GM12878 (cell line): ENCODE measurements at regions of chr11 and their contacts with region 1.

Region 1: GRCh38 chr11:111378861-111379601 is at the start of gene POU2AF1:
- DNase-seq: peak; percentile 82
- ATAC-seq: peak; percentile 76
- H3K4me3 ChIP-seq: peak within 1 kb of the TSS; percentile 69
- H3K27ac ChIP-seq: peak within 1 kb of the TSS; percentile 97
- H3K4me1 ChIP-seq: peaks cover 17% of the 10 kb centered on the region
- H3K27me3 ChIP-seq: no peaks in the 10 kb centered on the region
- CTCF ChIP-seq: no peak
- EP300 ChIP-seq: no peak; a peak in 1 of 4 replicates
- POLR2A ChIP-seq: peak; percentile 96
- RAD21 ChIP-seq: no peak
- polyA plus RNA-seq, gene POU2AF1: 13.1 to 92.7 TPM

Region 2: GRCh38 chr11:111359223-111360149 is 19.5 kb before region 1 on chr11:
- CTCF ChIA-PET with region 1: interaction called, 7 read pairs
- POLR2A ChIA-PET with region 1: interaction called, 63 read pairs
- RAD21 ChIA-PET with region 1: interaction called, 24 read pairs
- SMC1A ChIA-PET with region 1: interaction called, 21 read pairs
- in situ Hi-C with region 1: no loop called
- intact Hi-C with region 1: no loop called
- DNase-seq: no peak
- ATAC-seq: peak; percentile 46; the same call in 2 of the 3 replicates
- H3K4me3 ChIP-seq: no peak overlapping the region
- H3K27ac ChIP-seq: 0 out of 2 replicates have a peak overlapping the region, but pooled peaks have one; percentile 16
- H3K4me1 ChIP-seq: peaks cover 22% of the 10 kb centered on the region
- H3K27me3 ChIP-seq: no peaks in the 10 kb centered on the region
- CTCF ChIP-seq: peak; percentile 2 to 27 (median 23); a peak in 2 of 6 replicates
- EP300 ChIP-seq: no peak
- POLR2A ChIP-seq: no peak
- RAD21 ChIP-seq: peak; percentile 41

Region 3: DNA sequence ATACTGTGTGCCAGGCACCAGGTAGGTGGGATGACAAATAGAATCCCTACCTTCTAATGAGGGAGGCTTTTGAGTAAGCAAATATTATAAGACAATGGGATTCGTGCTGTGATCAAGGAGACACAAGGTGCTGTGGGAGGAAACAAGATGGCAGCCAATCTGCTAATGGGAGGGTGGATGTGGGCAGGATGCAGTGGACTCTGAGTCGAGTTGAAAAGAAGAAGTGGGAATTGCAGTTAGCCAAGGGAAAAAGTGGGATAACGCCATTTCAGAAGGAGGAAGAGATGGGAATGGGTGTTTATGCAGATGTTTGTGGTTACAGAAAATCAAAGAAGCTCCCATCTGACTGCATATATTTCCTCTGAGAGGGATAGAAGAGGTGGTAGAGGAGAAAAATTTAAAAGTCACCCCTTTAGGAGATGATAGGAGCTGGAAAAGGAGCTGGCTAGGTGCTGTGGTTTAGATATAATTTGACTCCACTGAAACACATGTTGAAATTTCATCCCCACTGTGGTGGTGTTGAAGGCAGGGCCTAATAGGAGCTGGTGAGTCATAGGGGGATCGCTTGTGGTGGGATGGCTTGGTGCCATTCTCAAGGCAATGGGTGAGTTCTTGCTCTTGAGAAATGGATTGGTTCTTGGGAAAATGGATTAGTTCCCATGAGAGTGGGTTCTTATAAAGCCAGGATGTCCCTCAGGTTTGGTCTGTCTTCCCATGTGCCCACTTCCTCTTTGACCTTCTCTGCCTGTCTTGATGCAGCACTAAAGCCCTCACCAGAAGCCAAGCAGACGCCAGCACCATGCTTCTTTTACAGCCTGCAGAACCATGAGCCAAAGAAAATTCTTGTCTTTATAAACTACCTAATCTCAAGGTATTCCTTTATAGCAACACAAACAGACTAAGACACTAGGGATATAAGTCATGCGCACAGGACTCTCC is 30.0 kb after region 1 on chr11:
- CTCF ChIA-PET with region 1: interaction called, 181 read pairs
- POLR2A ChIA-PET with region 1: interaction called, 415 read pairs
- RAD21 ChIA-PET with region 1: interaction called, 657 read pairs
- SMC1A ChIA-PET with region 1: interaction called, 972 read pairs
- in situ Hi-C with region 1: no loop called
- intact Hi-C with region 1: loop called (anchors 1 kb)
- DNase-seq: peak; percentile 91
- ATAC-seq: peak; percentile 69
- H3K4me3 ChIP-seq: peak overlapping the region; percentile 14; the same call in 1 of the 2 replicates
- H3K27ac ChIP-seq: peak overlapping the region; percentile 92
- H3K4me1 ChIP-seq: peaks cover 64% of the 10 kb centered on the region
- H3K27me3 ChIP-seq: no peaks in the 10 kb centered on the region
- CTCF ChIP-seq: no peak
- EP300 ChIP-seq: peak in 1 of 2 experiments; percentile 29; a peak in 1 of 4 replicates
- POLR2A ChIP-seq: no peak
- RAD21 ChIP-seq: no peak